ENCODE measurements at regions of chr6 and their contacts with region 1.

Region 1: GRCh38 chr6:57089687-57090460 is at the start of gene ZNF451:
- DNase-seq: peak; percentile 98
- H3K4me3 ChIP-seq: peak within 1 kb of the TSS; percentile 76
- H3K27ac ChIP-seq: peak within 1 kb of the TSS; percentile 89
- H3K4me1 ChIP-seq: peaks cover 42% of the 10 kb centered on the region
- H3K27me3 ChIP-seq: no peaks in the 10 kb centered on the region
- CTCF ChIP-seq: no peak
- total RNA-seq, gene ZNF451: 25.5 TPM

Region 2: GRCh38 chr6:56808871-56809359 is 281.0 kb before region 1 on chr6:
- intact Hi-C with region 1: no loop called
- DNase-seq: no peak
- H3K4me3 ChIP-seq: peak overlapping the region; percentile 7
- H3K27ac ChIP-seq: peak overlapping the region; percentile 70
- H3K4me1 ChIP-seq: peaks cover 84% of the 10 kb centered on the region
- H3K27me3 ChIP-seq: no peaks in the 10 kb centered on the region
- CTCF ChIP-seq: no peak

Region 3: DNA sequence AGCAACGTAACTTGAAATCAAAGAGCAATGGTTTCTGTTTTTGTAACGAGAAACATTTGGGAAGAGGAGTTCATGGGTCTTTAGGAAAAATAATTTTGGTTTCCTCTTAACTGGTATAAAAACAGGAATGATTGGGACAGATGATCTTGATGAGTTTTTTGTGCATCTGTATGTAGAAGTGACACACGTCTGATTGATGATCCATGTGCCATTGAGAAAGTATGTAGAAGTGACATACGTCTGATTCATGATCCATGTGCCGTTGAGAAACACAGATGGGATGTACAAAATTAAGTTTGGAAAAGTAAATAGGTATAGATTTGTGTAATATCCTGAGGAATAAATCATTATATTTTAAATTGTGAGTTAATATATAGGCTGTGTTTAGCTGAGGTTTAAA is 41.3 kb before region 1 on chr6:
- intact Hi-C with region 1: loop called (anchors 5 kb)
- DNase-seq: no peak
- H3K4me3 ChIP-seq: no peak overlapping the region
- H3K27ac ChIP-seq: no peak overlapping the region
- H3K4me1 ChIP-seq: peaks cover 16% of the 10 kb centered on the region
- H3K27me3 ChIP-seq: no peaks in the 10 kb centered on the region
- CTCF ChIP-seq: no peak

Measured in left ventricle myocardium inferior (tissue), 1 donor.